SK-N-SH (cell line): ENCODE measurements at regions of chr20 and their contacts with region 1.

Region 1: DNA sequence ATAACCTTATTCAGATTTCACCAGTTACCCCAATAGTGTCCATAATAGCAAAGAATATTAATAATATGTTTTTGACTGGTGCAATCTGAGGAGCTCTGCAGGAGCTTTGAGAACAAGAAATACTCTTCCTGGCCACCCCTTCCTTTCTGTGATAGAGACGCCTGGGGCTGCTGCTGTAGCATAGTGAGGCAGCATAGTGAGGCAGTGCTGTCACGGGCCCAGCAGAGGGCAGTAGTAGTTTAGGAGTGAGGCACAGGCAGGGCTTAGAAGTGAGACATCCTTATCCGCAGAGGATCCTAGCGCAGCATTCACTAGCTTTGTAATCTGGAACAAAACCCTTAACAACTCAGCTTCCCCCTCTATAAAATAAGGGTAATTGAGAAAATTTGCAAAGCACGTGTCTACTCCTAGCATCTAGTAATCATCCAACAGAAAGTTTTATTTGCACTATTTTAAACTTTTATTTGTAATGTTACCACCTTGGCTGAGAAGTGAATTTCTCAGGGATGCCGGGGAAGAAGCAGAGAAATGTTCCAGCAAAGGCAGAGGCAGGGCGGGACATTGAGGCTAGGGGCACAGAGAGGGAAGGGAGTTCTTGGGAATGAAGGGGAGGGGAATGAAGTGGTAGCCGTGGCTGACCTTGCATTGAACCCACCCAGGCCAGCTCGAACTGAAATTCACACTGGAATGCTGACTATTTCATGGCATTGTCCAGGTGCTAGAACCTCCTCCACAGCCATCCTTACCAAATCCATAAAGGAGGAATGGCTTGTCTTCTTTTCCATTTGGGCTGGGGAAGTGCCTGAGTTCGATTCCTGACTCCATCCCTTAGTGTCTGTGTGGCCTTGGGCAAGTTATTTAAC is 78.8 kb downstream of the CDS2 start:
- DNase-seq: peak; percentile 83
- H3K4me3 ChIP-seq: no peak overlapping the region; a peak in 1 of 4 replicates
- H3K27ac ChIP-seq: no peak overlapping the region; a peak in 1 of 4 replicates
- H3K4me1 ChIP-seq: peaks cover 0 to 5% of the 10 kb centered on the region in 2 experiments; a peak in 1 of 4 replicates
- H3K27me3 ChIP-seq: no peaks in the 10 kb centered on the region
- CTCF ChIP-seq: peak; percentile 96
- EP300 ChIP-seq: no peak
- RAD21 ChIP-seq: peak; percentile 98

Region 2: GRCh38 chr20:5046656-5047339 is 158.8 kb before region 1 on chr20:
- CTCF ChIA-PET with region 1: no interaction called
- POLR2A ChIA-PET with region 1: no interaction called
- DNase-seq: no peak
- H3K4me3 ChIP-seq: no peak overlapping the region
- H3K27ac ChIP-seq: no peak overlapping the region
- H3K4me1 ChIP-seq: no peaks in the 10 kb centered on the region
- H3K27me3 ChIP-seq: no peaks in the 10 kb centered on the region
- CTCF ChIP-seq: no peak
- EP300 ChIP-seq: no peak
- RAD21 ChIP-seq: no peak

Region 3: DNA sequence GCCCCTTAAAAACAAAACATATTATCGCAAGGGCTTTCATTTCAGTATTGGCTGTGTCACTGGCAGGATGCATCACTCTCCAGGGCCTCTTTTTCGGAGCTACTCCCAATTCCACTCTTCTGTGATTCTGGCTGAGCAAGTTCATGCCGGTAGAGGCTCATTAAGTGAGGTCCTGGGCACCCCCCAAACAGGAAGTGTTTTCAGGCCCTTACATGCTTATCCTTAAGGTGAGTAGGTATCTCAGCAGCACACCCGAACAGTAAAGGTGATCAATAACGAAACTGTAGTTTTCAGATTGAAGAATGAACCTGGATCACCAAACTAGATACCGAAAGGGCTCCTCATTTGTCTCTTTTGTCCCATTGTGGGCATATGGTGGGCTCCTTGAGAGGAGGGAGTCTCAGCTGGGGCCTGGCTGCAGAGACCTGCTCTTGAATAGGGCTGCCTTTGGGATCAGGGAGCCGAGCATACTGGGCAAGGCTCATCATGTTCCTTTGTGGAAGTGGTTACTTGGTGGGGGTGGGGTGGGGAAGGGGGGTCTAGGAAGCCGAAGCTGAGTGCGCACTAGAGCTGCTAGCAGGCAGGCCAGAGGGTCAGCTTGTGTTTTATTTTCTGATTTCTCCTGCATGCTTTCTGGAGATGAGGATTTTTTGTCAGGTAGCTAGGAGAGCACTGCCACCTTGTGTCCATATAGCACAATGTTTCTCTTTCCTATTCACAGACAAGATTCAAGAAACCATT is 13.6 kb before region 1 on chr20:
- CTCF ChIA-PET with region 1: interaction called, 21 read pairs
- POLR2A ChIA-PET with region 1: no interaction called
- DNase-seq: peak; percentile 74
- H3K4me3 ChIP-seq: no peak overlapping the region
- H3K27ac ChIP-seq: peak overlapping the region in 1 of 2 experiments; percentile 25; a peak in 1 of 4 replicates
- H3K4me1 ChIP-seq: no peaks in the 10 kb centered on the region; a peak in 1 of 4 replicates
- H3K27me3 ChIP-seq: no peaks in the 10 kb centered on the region
- CTCF ChIP-seq: peak; percentile 78
- EP300 ChIP-seq: no peak
- RAD21 ChIP-seq: peak; percentile 97

Region 4: GRCh38 chr20:5297280-5298004 is 91.9 kb after region 1 on chr20:
- CTCF ChIA-PET with region 1: interaction called, 12 read pairs
- POLR2A ChIA-PET with region 1: no interaction called
- DNase-seq: peak; percentile 58
- H3K4me3 ChIP-seq: no peak overlapping the region
- H3K27ac ChIP-seq: peak overlapping the region in 1 of 2 experiments; percentile 51; a peak in 1 of 4 replicates
- H3K4me1 ChIP-seq: peaks cover 0 to 14% of the 10 kb centered on the region in 2 experiments; a peak in 1 of 4 replicates
- H3K27me3 ChIP-seq: no peaks in the 10 kb centered on the region; the same call in 1 of the 2 replicates
- CTCF ChIP-seq: no peak
- EP300 ChIP-seq: peak in 1 of 2 experiments; percentile 68; a peak in 1 of 4 replicates
- RAD21 ChIP-seq: peak; percentile 12; the same call in 1 of the 2 replicates

Region 5: GRCh38 chr20:5327356-5327755 is 121.8 kb after region 1 on chr20:
- CTCF ChIA-PET with region 1: interaction called, 13 read pairs
- POLR2A ChIA-PET with region 1: no interaction called
- DNase-seq: peak; percentile 29
- H3K4me3 ChIP-seq: no peak overlapping the region
- H3K27ac ChIP-seq: peak overlapping the region in 1 of 2 experiments; percentile 61; a peak in 1 of 4 replicates
- H3K4me1 ChIP-seq: peaks cover 0 to 16% of the 10 kb centered on the region in 2 experiments; a peak in 1 of 4 replicates
- H3K27me3 ChIP-seq: peaks cover 6% of the 10 kb centered on the region
- CTCF ChIP-seq: no peak
- EP300 ChIP-seq: peak in 1 of 2 experiments; percentile 6; a peak in 1 of 4 replicates
- RAD21 ChIP-seq: no peak

Region 6: DNA sequence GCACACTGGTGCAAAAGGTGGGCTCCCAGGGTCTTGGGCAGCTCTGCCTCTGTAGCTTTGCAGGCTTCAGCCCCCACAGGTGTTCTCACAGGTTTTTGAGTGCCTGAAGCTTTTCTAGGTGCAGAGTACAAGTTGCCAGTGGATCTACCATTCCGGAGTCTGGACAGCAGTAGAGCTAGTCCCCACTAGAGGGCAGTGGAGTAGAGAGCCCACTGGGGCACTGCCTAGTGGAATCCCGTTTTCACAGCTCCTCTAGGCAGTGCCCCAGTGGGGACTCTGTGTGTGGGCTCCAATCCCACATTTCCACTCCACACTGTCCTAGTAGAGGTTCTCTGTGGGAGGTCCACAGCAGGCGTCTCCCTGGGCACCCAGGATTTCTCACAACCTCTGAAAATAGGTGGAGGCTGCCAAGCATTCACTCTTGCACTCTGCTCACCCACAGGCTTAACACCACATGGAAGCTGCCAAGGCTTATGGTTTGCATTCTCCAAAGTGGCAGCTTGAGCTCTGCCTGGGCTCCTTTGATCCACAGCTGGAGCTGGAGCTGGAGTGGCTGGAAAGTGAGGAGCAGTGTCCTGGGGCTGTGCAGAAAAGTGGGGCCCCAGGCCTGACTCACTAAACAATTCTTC is 197.4 kb after region 1 on chr20:
- CTCF ChIA-PET with region 1: interaction called, 13 read pairs
- POLR2A ChIA-PET with region 1: no interaction called
- DNase-seq: no peak
- H3K4me3 ChIP-seq: no peak overlapping the region; a peak in 1 of 4 replicates
- H3K27ac ChIP-seq: no peak overlapping the region; a peak in 1 of 4 replicates
- H3K4me1 ChIP-seq: peaks cover 0 to 12% of the 10 kb centered on the region in 2 experiments; a peak in 2 of 4 replicates
- H3K27me3 ChIP-seq: no peaks in the 10 kb centered on the region
- CTCF ChIP-seq: peak; percentile 53
- EP300 ChIP-seq: no peak
- RAD21 ChIP-seq: peak; percentile 38

Region 7: GRCh38 chr20:5442101-5442500 is 236.5 kb after region 1 on chr20:
- CTCF ChIA-PET with region 1: interaction called, 260 read pairs
- POLR2A ChIA-PET with region 1: interaction called, 8 read pairs
- DNase-seq: no peak
- H3K4me3 ChIP-seq: no peak overlapping the region
- H3K27ac ChIP-seq: no peak overlapping the region
- H3K4me1 ChIP-seq: 0 out of 4 replicates have a peak, but pooled peaks cover 0 to 2% of the 10 kb centered on the region in 2 experiments
- H3K27me3 ChIP-seq: no peaks in the 10 kb centered on the region
- CTCF ChIP-seq: no peak
- EP300 ChIP-seq: no peak
- RAD21 ChIP-seq: no peak

Region 8: DNA sequence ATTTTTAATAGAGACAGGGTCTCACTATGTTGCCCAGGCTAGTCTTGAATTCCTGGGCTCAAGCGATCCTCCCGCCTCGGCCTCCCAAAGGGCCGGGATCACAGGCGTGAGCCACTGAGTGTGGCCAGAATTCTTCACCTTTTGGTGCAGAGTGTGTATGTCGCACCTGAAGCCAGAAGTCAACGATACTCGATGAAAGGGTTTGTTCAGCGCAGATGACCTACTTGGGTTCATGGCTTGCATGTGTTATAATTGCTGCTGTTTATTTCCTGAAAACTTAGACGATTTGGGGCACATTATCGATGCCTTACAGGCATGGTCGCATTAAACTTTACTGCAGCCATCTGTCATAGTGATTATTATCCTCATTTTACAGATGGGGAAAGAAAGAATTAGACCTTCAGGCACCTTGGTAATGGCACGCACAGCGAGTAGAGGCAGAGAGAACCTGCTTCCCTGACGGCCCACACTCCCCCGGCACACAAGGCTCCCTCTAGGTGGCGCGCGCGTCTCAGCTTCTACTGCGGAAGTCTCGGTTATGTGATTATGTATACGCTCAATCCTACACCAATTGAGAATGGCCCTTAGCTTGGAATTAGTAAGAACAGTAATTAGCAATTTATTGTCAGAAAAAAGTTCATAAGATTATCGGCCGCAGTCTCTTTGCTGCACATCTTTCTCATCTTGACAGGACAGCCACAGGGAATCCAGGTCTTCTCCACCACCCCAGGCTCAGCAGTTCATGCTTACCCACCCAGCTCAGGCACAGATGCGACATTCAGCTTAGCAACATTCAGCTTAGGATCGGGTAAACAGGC is 324.0 kb after region 1 on chr20:
- CTCF ChIA-PET with region 1: interaction called, 20 read pairs
- POLR2A ChIA-PET with region 1: no interaction called
- DNase-seq: peak; percentile 73
- H3K4me3 ChIP-seq: peak overlapping the region; percentile 28 to 36
- H3K27ac ChIP-seq: no peak overlapping the region; a peak in 1 of 4 replicates
- H3K4me1 ChIP-seq: peaks cover 0 to 2% of the 10 kb centered on the region in 2 experiments; a peak in 1 of 4 replicates
- H3K27me3 ChIP-seq: no peaks in the 10 kb centered on the region
- CTCF ChIP-seq: peak; percentile 94
- EP300 ChIP-seq: no peak; a peak in 1 of 4 replicates
- RAD21 ChIP-seq: peak; percentile 84